ENCODE measurements at regions of chr6 and their contacts with region 1.

Region 1: DNA sequence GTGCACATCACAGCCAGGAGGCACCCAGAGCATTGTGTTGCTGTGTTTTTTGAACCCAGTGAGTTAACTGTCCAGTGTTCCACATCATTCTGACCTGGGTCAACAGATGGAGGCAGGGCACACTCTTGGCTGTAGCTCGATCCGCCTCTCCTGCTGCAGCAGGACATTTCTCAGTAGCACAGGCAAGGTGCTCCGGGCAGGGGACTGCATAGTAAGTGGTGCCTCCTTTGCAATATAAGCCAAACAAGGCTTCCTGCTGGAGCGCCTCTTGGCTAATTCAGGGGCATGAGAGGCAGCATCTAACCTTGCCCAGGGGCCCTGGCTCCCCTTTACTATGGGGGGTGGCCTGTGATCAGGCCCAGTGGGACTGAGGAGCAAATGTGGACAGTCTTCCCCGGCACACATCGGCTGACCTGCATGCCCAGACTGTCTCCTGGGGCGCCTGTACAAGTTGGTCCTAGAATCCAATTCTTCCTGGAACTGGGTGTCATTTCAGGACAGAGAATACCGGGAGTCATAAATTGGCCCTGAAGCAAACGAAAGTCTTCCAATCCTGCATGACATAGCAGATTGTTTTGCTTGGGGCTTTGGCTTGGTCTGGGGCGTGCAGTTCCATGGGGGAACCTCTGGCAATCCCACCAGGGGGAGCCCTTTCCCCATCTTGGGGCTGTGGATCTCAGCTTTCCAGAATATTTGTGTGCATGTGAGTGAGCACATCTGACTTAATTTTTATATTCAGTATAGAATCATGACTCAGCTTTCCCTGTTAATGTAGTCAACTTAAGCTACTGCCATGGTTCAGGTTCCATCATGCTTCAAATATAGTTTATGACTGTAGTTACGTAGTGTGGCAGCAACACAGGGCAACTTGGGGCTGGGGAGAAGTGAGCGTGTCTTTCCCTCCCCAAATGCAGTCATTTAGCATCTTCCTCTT is 56.0 kb upstream of the DDR1 start:
- DNase-seq: peak; percentile 90
- ATAC-seq: peak; percentile 98
- H3K4me3 ChIP-seq: no peak overlapping the region
- H3K27ac ChIP-seq: peak overlapping the region; percentile 58
- H3K4me1 ChIP-seq: peaks cover 16% of the 10 kb centered on the region
- H3K27me3 ChIP-seq: peaks cover 5% of the 10 kb centered on the region
- CTCF ChIP-seq: peak; percentile 99
- POLR2A ChIP-seq: peak; percentile 59
- RAD21 ChIP-seq: peak; percentile 99

Region 2: GRCh38 chr6:30707281-30707872 is 120.9 kb before region 1 on chr6:
- CTCF ChIA-PET with region 1: no interaction called
- POLR2A ChIA-PET with region 1: no interaction called
- dilution Hi-C with region 1: no loop called
- in situ Hi-C with region 1: no loop called
- intact Hi-C with region 1: no loop called
- DNase-seq: no peak
- ATAC-seq: no peak
- H3K4me3 ChIP-seq: no peak overlapping the region
- H3K27ac ChIP-seq: no peak overlapping the region
- H3K4me1 ChIP-seq: no peaks in the 10 kb centered on the region
- H3K27me3 ChIP-seq: no peaks in the 10 kb centered on the region
- CTCF ChIP-seq: no peak
- POLR2A ChIP-seq: no peak
- RAD21 ChIP-seq: no peak

Region 3: GRCh38 chr6:30742316-30743098 is 85.8 kb before region 1 on chr6 and contains the start of gene FLOT1:
- CTCF ChIA-PET with region 1: no interaction called
- POLR2A ChIA-PET with region 1: interaction called, 7 read pairs
- dilution Hi-C with region 1: no loop called
- in situ Hi-C with region 1: loop called (anchors 5 kb)
- intact Hi-C with region 1: loop called (anchors 1 kb)
- DNase-seq: peak; percentile 93
- ATAC-seq: peak; percentile 83
- H3K4me3 ChIP-seq: peak within 1 kb of the TSS; percentile 96
- H3K27ac ChIP-seq: peak within 1 kb of the TSS; percentile 98
- H3K4me1 ChIP-seq: peaks cover 18% of the 10 kb centered on the region
- H3K27me3 ChIP-seq: no peaks in the 10 kb centered on the region
- CTCF ChIP-seq: no peak
- POLR2A ChIP-seq: peak; percentile 60
- RAD21 ChIP-seq: 0 out of 2 replicates have a peak, but pooled peaks have one; percentile 9
- total RNA-seq, gene FLOT1: 96.2 and 104 TPM in 2 replicates

Region 4: DNA sequence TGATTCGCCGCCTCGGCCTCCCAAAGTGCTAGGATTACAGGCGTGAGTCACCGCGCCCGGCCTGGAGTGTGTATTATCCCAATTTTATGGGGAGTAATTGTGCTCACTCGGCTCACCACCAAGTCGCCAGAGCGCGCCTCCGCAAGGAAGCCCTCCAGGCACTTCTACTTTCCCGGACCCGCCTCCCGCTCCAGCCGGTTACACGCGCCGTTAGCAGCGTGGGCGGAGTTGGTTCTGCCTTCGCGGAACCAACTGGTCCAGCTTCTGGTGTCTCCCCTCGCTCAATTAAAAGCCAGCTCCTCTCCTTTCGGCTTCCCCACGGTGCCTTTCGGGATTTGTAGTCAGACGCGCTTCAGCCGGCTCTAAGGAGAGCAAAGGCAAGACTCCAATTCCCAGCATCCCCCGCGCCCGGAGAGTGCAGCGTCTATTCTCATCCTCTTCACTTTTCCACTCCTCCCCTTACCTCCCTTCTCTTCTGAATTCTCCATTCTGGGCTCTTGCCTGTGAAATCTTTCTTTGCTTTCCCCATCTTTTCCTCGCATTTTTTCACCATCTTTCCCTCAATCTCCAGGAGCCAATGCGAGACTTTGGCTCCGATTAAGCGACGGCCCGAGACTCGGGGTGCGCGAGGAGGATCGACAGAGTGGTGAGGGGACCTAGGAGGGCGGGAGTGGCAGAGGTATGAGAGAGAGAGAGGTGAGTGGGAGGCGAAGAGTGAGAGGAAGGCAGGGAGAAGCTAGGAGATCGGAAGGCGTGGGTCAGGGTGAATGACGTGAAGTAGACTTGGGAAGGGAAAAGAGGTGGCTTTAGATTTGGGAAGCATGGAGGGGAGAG is 79.7 kb after region 1 on chr6 and contains the start of gene GTF2H4:
- CTCF ChIA-PET with region 1: interaction called, 4 read pairs
- POLR2A ChIA-PET with region 1: no interaction called
- dilution Hi-C with region 1: no loop called
- in situ Hi-C with region 1: no loop called
- intact Hi-C with region 1: loop called (anchors 1 kb)
- DNase-seq: peak; percentile 98
- ATAC-seq: peak; percentile 99
- H3K4me3 ChIP-seq: peak within 1 kb of the TSS; percentile 96
- H3K27ac ChIP-seq: peak within 1 kb of the TSS; percentile 77
- H3K4me1 ChIP-seq: peaks cover 5% of the 10 kb centered on the region
- H3K27me3 ChIP-seq: no peaks in the 10 kb centered on the region
- CTCF ChIP-seq: no peak
- POLR2A ChIP-seq: no peak
- RAD21 ChIP-seq: peak; percentile 15; the same call in 1 of the 2 replicates
- total RNA-seq, gene GTF2H4: 6.9 and 13.4 TPM in 2 replicates

Region 5: GRCh38 chr6:31068669-31069340 is 240.5 kb after region 1 on chr6:
- CTCF ChIA-PET with region 1: interaction called, 4 read pairs
- POLR2A ChIA-PET with region 1: no interaction called
- dilution Hi-C with region 1: no loop called
- in situ Hi-C with region 1: no loop called
- intact Hi-C with region 1: loop called (anchors 1 kb)
- DNase-seq: peak; percentile 83
- ATAC-seq: peak; percentile 74
- H3K4me3 ChIP-seq: no peak overlapping the region
- H3K27ac ChIP-seq: no peak overlapping the region
- H3K4me1 ChIP-seq: peaks cover 3% of the 10 kb centered on the region
- H3K27me3 ChIP-seq: no peaks in the 10 kb centered on the region
- CTCF ChIP-seq: peak; percentile 86
- POLR2A ChIP-seq: no peak
- RAD21 ChIP-seq: peak; percentile 77

Region 6: DNA sequence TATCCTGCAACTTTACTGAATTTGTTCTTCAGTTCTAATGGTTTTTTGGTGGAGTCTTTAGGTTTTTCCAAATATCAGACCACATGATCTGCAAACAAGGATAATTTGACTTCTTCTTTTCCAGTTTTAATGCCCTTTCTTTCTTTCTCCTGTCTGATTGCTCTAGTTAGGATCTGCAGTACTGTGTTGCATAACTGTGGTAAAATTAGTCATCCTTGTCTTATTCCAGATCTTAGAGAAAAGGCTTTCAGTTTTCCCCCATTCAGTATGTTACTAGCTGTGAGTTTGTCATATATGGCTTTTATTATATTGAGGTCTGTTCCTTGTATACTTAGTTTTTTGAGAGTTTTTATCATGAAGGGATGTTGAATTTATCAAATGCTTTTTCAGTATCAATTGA is 579.4 kb after region 1 on chr6:
- CTCF ChIA-PET with region 1: no interaction called
- POLR2A ChIA-PET with region 1: no interaction called
- dilution Hi-C with region 1: no loop called
- in situ Hi-C with region 1: no loop called
- intact Hi-C with region 1: no loop called
- DNase-seq: peak; percentile 78
- ATAC-seq: peak; percentile 27; the same call in 1 of the 2 replicates
- H3K4me3 ChIP-seq: no peak overlapping the region
- H3K27ac ChIP-seq: no peak overlapping the region
- H3K4me1 ChIP-seq: no peaks in the 10 kb centered on the region; the same call in none of the 2 replicates
- H3K27me3 ChIP-seq: no peaks in the 10 kb centered on the region
- CTCF ChIP-seq: no peak
- POLR2A ChIP-seq: no peak
- RAD21 ChIP-seq: no peak

Measured in IMR-90 (cell line).